Sigmoid colon (tissue), 7 donors: ENCODE measurements at regions of chr11 and their contacts with region 1.

Region 1: DNA sequence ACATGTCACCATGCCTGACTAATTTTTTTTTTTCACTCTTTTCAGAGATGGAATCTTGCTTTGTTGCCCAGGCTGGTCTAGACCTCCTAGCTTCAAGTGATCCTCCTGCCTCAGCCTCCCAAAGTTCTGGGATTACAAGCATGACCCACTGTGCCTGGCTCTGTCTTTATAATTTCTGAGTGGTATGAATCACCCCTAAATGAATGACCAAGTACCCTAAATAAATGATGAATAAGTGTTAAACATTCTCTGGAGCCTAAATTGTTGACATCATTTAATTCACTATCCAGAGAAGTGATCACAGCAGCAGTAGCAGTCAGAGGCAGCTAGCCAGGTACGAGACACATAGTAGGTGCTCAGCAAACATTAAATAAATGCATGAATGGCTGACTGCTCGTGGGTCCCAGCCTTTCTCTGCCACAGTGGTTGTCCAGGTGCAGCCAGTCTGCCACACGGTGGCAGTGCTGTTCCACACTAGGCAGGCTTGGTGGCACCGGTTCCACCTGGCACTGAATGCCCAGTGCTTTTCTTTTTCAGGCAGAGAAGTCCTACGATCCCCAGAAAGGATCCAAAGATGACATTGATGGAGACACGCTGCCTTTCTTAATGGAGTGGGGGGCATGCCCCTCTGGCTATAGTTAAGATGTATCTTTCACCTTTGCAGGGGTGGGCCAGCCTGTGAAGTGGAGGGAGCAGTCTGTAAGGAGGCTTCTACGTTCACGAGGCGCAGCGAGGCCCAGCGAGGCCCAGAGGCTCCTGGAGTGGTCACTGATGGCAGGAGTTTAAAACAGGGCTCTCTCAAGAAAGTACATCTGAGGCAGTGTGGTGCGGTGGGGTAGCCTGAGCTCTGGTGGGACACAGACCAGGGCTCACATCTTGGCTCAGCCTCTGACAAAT is 8.7 kb upstream of the TTC12 start:
- DNase-seq: peak; percentile 83
- H3K4me3 ChIP-seq: no peak overlapping the region
- H3K27ac ChIP-seq: no peak overlapping the region
- H3K4me1 ChIP-seq: no peaks in the 10 kb centered on the region
- H3K27me3 ChIP-seq: no peaks in the 10 kb centered on the region
- CTCF ChIP-seq: peak; percentile 87 to 89 (median 88)
- EP300 ChIP-seq: no peak
- POLR2A ChIP-seq: no peak

Region 2: GRCh38 chr11:113532697-113533424 is 227.2 kb after region 1 on chr11:
- intact Hi-C with region 1: loop called (anchors 1 kb)
- DNase-seq: peak; percentile 77
- H3K4me3 ChIP-seq: no peak overlapping the region
- H3K27ac ChIP-seq: no peak overlapping the region
- H3K4me1 ChIP-seq: no peaks in the 10 kb centered on the region
- H3K27me3 ChIP-seq: no peaks in the 10 kb centered on the region
- CTCF ChIP-seq: peak; percentile 30 to 83 (median 62)
- EP300 ChIP-seq: no peak
- POLR2A ChIP-seq: no peak

Region 3: GRCh38 chr11:113730887-113731726 is 425.4 kb after region 1 on chr11:
- intact Hi-C with region 1: loop called (anchors 1 kb)
- DNase-seq: no peak
- H3K4me3 ChIP-seq: no peak overlapping the region
- H3K27ac ChIP-seq: no peak overlapping the region
- H3K4me1 ChIP-seq: peaks cover 0 to 6% (median 0%) of the 10 kb centered on the region in 4 donors
- H3K27me3 ChIP-seq: no peaks in the 10 kb centered on the region
- CTCF ChIP-seq: peak in 3 of 4 experiments; percentile 21 to 70 (median 42)
- EP300 ChIP-seq: no peak
- POLR2A ChIP-seq: no peak

Region 4: GRCh38 chr11:113796663-113797259 is 491.1 kb after region 1 on chr11:
- intact Hi-C with region 1: loop called (anchors 5 kb)
- DNase-seq: no peak
- H3K4me3 ChIP-seq: no peak overlapping the region
- H3K27ac ChIP-seq: no peak overlapping the region
- H3K4me1 ChIP-seq: no peaks in the 10 kb centered on the region
- H3K27me3 ChIP-seq: no peaks in the 10 kb centered on the region
- CTCF ChIP-seq: peak; percentile 18 to 64 (median 52)
- EP300 ChIP-seq: no peak
- POLR2A ChIP-seq: no peak